ENCODE measurements at regions of chr16 and their contacts with region 1.

Region 1: GRCh38 chr16:77236063-77236511 is 36.9 kb downstream of the SYCE1L start:
- DNase-seq: peak; percentile 87
- H3K4me3 ChIP-seq: no peak overlapping the region
- H3K27ac ChIP-seq: no peak overlapping the region
- H3K4me1 ChIP-seq: no peaks in the 10 kb centered on the region
- H3K27me3 ChIP-seq: no peaks in the 10 kb centered on the region
- CTCF ChIP-seq: peak; percentile 99 to 100
- POLR2A ChIP-seq: no peak

Region 2: DNA sequence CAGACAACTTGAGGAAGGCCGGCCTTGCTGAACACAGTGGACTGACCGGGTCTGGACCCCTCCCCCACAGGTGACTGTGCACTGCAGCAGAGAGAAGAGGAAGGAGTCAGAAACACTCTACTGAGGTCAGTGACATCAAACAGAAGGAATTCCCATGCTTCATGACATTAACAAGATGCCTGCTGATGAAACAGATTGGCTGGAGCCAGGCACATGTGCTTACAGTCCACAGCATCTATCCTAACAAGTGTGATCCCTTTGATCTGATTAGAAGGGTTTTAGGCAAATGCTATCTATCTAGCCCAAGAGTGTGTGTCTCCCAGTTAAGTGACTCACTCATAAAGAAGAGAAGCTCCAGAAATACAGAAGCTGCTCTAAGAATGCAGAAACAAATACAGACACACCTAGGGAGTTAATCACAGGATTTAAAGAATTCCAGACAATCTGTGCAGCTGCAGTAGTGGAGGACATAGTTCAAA is 53.3 kb after region 1 on chr16:
- CTCF ChIA-PET with region 1: no interaction called
- POLR2A ChIA-PET with region 1: no interaction called
- dilution Hi-C with region 1: no loop called
- intact Hi-C with region 1: loop called (anchors 2 kb)
- DNase-seq: peak; percentile 65
- H3K4me3 ChIP-seq: no peak overlapping the region
- H3K27ac ChIP-seq: peak overlapping the region; percentile 64
- H3K4me1 ChIP-seq: peaks cover 31% of the 10 kb centered on the region
- H3K27me3 ChIP-seq: no peaks in the 10 kb centered on the region
- CTCF ChIP-seq: no peak
- POLR2A ChIP-seq: no peak

Region 3: GRCh38 chr16:77406677-77407076 is 170.6 kb after region 1 on chr16:
- CTCF ChIA-PET with region 1: interaction called, 6 read pairs
- POLR2A ChIA-PET with region 1: no interaction called
- dilution Hi-C with region 1: no loop called
- intact Hi-C with region 1: loop called (anchors 1 kb)
- DNase-seq: peak; percentile 32
- H3K4me3 ChIP-seq: no peak overlapping the region
- H3K27ac ChIP-seq: no peak overlapping the region
- H3K4me1 ChIP-seq: peaks cover 25% of the 10 kb centered on the region
- H3K27me3 ChIP-seq: no peaks in the 10 kb centered on the region
- CTCF ChIP-seq: peak; percentile 26 to 28
- POLR2A ChIP-seq: no peak

Region 4: GRCh38 chr16:77599793-77600415 is 363.8 kb after region 1 on chr16:
- CTCF ChIA-PET with region 1: interaction called, 6 read pairs
- POLR2A ChIA-PET with region 1: no interaction called
- dilution Hi-C with region 1: loop called (anchors 25 kb)
- intact Hi-C with region 1: loop called (anchors 1 kb)
- DNase-seq: peak; percentile 77
- H3K4me3 ChIP-seq: no peak overlapping the region
- H3K27ac ChIP-seq: no peak overlapping the region
- H3K4me1 ChIP-seq: peaks cover 26% of the 10 kb centered on the region
- H3K27me3 ChIP-seq: no peaks in the 10 kb centered on the region
- CTCF ChIP-seq: peak; percentile 81 to 94
- POLR2A ChIP-seq: no peak

Region 5: GRCh38 chr16:77971306-77972271 is 735.5 kb after region 1 on chr16:
- CTCF ChIA-PET with region 1: interaction called, 5 read pairs
- POLR2A ChIA-PET with region 1: interaction called, 8 read pairs
- dilution Hi-C with region 1: no loop called
- intact Hi-C with region 1: loop called (anchors 1 kb)
- DNase-seq: peak; percentile 52
- H3K4me3 ChIP-seq: no peak overlapping the region
- H3K27ac ChIP-seq: no peak overlapping the region
- H3K4me1 ChIP-seq: no peaks in the 10 kb centered on the region
- H3K27me3 ChIP-seq: no peaks in the 10 kb centered on the region
- CTCF ChIP-seq: peak; percentile 73 to 81
- POLR2A ChIP-seq: no peak

Measured in endothelial cell of umbilical vein (primary cell).